CD8-positive, alpha-beta T cell (primary cell): ENCODE measurements at regions of chr15 and their contacts with region 1.

Region 1: GRCh38 chr15:94163999-94164807 is 67.2 kb upstream of the MCTP2 start:
- DNase-seq: peak; percentile 19 to 71 (median 54)
- ATAC-seq: no peak
- H3K4me3 ChIP-seq: no peak overlapping the region
- H3K4me3 Mint-ChIP-seq: no peak overlapping the region
- H3K27ac ChIP-seq: no peak overlapping the region
- H3K27ac Mint-ChIP-seq: no peak overlapping the region
- H3K4me1 ChIP-seq: no peaks in the 10 kb centered on the region
- H3K4me1 Mint-ChIP-seq: no peaks in the 10 kb centered on the region
- H3K27me3 ChIP-seq: no peaks in the 10 kb centered on the region
- H3K27me3 Mint-ChIP-seq: no peaks in the 10 kb centered on the region
- CTCF ChIP-seq: peak; percentile 89

Region 2: DNA sequence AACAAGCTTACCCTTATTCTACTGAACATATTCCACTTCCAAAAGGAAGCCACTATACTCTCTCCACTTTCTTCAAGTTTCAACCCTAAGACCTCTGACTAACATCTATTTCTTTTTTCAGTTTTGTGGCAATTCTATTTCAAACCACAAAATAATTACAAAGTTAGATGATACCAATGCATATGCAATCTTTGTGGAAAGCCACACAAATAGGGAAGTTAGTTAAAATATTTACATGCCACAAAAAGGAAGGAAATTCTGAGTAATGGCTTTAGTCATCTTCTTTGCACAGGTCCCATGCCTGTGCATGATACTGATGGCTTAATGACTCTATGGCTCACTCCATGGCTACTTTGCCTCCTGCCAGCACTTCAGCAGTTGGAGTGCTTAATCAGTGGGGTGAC is 10.2 kb after region 1 on chr15:
- CTCF ChIA-PET with region 1: interaction called, 11 read pairs
- POLR2A ChIA-PET with region 1: no interaction called
- intact Hi-C with region 1: no loop called
- DNase-seq: peak in 1 of 9 experiments; percentile 31
- ATAC-seq: no peak
- H3K4me3 ChIP-seq: no peak overlapping the region
- H3K4me3 Mint-ChIP-seq: no peak overlapping the region
- H3K27ac ChIP-seq: no peak overlapping the region
- H3K27ac Mint-ChIP-seq: no peak overlapping the region
- H3K4me1 ChIP-seq: no peaks in the 10 kb centered on the region
- H3K4me1 Mint-ChIP-seq: no peaks in the 10 kb centered on the region
- H3K27me3 ChIP-seq: no peaks in the 10 kb centered on the region
- H3K27me3 Mint-ChIP-seq: no peaks in the 10 kb centered on the region
- CTCF ChIP-seq: no peak

Region 3: GRCh38 chr15:94230956-94231722 is 66.9 kb after region 1 on chr15 and contains the start of gene MCTP2:
- CTCF ChIA-PET with region 1: interaction called, 23 read pairs
- POLR2A ChIA-PET with region 1: no interaction called
- intact Hi-C with region 1: no loop called
- DNase-seq: peak; percentile 66 to 94 (median 82)
- ATAC-seq: peak; percentile 85
- H3K4me3 ChIP-seq: peak within 1 kb of the TSS; percentile 67 to 69
- H3K4me3 Mint-ChIP-seq: peak within 1 kb of the TSS; percentile 95
- H3K27ac ChIP-seq: peak within 1 kb of the TSS; percentile 80 to 85
- H3K27ac Mint-ChIP-seq: peak within 1 kb of the TSS; percentile 95
- H3K4me1 ChIP-seq: peaks cover 32% of the 10 kb centered on the region
- H3K4me1 Mint-ChIP-seq: peaks cover 53% of the 10 kb centered on the region
- H3K27me3 ChIP-seq: no peaks in the 10 kb centered on the region
- H3K27me3 Mint-ChIP-seq: no peaks in the 10 kb centered on the region
- CTCF ChIP-seq: no peak
- total RNA-seq, gene MCTP2: 11.2 to 16.5 TPM

Region 4: GRCh38 chr15:94317201-94317600 is 153.0 kb after region 1 on chr15:
- CTCF ChIA-PET with region 1: interaction called, 322 read pairs
- POLR2A ChIA-PET with region 1: no interaction called
- intact Hi-C with region 1: no loop called
- DNase-seq: no peak
- ATAC-seq: no peak
- H3K4me3 ChIP-seq: no peak overlapping the region
- H3K4me3 Mint-ChIP-seq: no peak overlapping the region
- H3K27ac ChIP-seq: no peak overlapping the region
- H3K27ac Mint-ChIP-seq: no peak overlapping the region
- H3K4me1 ChIP-seq: no peaks in the 10 kb centered on the region
- H3K4me1 Mint-ChIP-seq: no peaks in the 10 kb centered on the region
- H3K27me3 ChIP-seq: no peaks in the 10 kb centered on the region
- H3K27me3 Mint-ChIP-seq: no peaks in the 10 kb centered on the region
- CTCF ChIP-seq: no peak

Region 5: DNA sequence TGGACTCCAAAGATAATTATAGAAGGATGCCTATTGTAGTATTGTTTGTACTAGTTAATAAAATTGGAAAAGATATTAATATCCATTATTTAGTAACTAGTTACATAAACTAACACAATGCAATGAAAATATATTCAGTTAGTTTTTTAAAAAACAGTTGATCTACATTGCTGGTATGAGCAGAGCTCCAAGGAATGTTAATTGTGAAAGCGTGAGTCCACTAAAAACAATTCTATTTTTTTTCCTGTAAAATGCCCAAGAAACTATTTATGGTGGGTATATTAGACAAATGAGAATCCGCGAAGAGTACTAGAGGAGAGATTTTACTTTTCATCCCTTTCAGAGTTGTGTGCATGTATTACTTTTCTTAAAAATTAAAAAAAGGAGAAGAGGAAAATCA is 171.4 kb after region 1 on chr15:
- CTCF ChIA-PET with region 1: interaction called, 38 read pairs
- POLR2A ChIA-PET with region 1: no interaction called
- intact Hi-C with region 1: no loop called
- DNase-seq: no peak
- ATAC-seq: no peak
- H3K4me3 ChIP-seq: no peak overlapping the region
- H3K4me3 Mint-ChIP-seq: no peak overlapping the region
- H3K27ac ChIP-seq: no peak overlapping the region
- H3K27ac Mint-ChIP-seq: no peak overlapping the region
- H3K4me1 ChIP-seq: no peaks in the 10 kb centered on the region
- H3K4me1 Mint-ChIP-seq: no peaks in the 10 kb centered on the region
- H3K27me3 ChIP-seq: no peaks in the 10 kb centered on the region
- H3K27me3 Mint-ChIP-seq: no peaks in the 10 kb centered on the region
- CTCF ChIP-seq: no peak

Region 6: DNA sequence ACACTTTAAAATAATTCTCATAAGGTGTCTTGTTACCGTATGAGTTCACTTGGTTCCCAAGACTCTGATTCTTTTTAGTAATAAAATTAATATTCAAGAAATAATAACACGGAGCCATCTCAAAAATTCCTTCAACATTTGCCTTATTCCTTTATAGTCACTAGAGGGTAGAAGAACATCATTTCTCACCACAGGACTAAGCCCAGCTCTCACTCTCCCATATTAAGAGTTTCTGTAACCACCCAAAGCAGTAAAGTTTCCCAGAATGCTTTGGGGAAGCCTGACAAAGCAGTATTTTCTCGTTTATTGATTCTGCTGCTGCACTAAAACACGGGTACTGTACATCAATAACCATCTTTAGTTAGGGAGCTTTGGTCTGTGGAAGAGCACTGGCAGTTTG is 182.1 kb after region 1 on chr15:
- CTCF ChIA-PET with region 1: interaction called, 18 read pairs
- POLR2A ChIA-PET with region 1: no interaction called
- intact Hi-C with region 1: no loop called
- DNase-seq: no peak
- ATAC-seq: no peak
- H3K4me3 ChIP-seq: no peak overlapping the region
- H3K4me3 Mint-ChIP-seq: no peak overlapping the region
- H3K27ac ChIP-seq: no peak overlapping the region
- H3K27ac Mint-ChIP-seq: no peak overlapping the region
- H3K4me1 ChIP-seq: no peaks in the 10 kb centered on the region
- H3K4me1 Mint-ChIP-seq: peaks cover 2% of the 10 kb centered on the region
- H3K27me3 ChIP-seq: no peaks in the 10 kb centered on the region
- H3K27me3 Mint-ChIP-seq: no peaks in the 10 kb centered on the region
- CTCF ChIP-seq: no peak

Region 7: DNA sequence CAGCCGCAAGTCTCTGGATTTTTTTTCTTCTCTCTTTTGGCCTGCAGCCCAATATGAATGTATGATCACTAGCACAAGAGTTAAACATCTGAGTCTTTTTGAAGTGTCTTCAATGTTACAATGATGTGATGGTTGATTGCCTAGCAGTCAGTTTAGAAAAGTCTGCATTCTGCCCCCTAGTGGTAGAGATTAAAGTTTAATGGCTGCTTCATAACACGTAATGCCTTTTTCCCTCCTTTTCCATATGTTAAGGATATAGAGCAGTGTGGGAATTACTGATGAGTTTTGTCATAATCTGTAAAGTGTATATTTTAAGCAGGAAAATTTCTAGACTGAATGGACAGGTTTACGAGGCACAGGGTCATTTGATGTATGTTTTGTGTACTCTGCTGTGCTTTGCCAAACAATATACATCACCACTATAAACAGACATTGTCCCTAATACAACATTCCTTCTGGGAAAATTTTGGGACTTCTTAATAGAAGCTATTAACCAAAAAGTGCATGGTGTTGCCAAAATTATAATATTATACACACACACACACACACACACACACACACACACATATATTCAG is 1127.8 kb after region 1 on chr15:
- CTCF ChIA-PET with region 1: no interaction called
- POLR2A ChIA-PET with region 1: no interaction called
- intact Hi-C with region 1: loop called in 1 of 2 experiments (anchors 5 kb)
- DNase-seq: peak in 2 of 9 experiments; percentile 33 to 42
- ATAC-seq: no peak
- H3K4me3 ChIP-seq: no peak overlapping the region
- H3K4me3 Mint-ChIP-seq: no peak overlapping the region
- H3K27ac ChIP-seq: no peak overlapping the region
- H3K27ac Mint-ChIP-seq: no peak overlapping the region
- H3K4me1 ChIP-seq: no peaks in the 10 kb centered on the region
- H3K4me1 Mint-ChIP-seq: no peaks in the 10 kb centered on the region
- H3K27me3 ChIP-seq: peaks cover 0 to 3% of the 10 kb centered on the region in 2 experiments
- H3K27me3 Mint-ChIP-seq: peaks cover 42% of the 10 kb centered on the region
- CTCF ChIP-seq: peak; percentile 43